Activated naive CD4-positive, alpha-beta T cell treated with anti-CD3 and anti-CD28 coated beads, Interleukin-2, amount 10 ng/mL, durations not matched to agents 7 days and 5 days (primary cell): ENCODE measurements at regions of chr11 and their contacts with region 1.

Region 1: GRCh38 chr11:66311965-66312548 is 4.8 kb downstream of the CD248 start:
- DNase-seq: peak; percentile 98
- H3K4me3 Mint-ChIP-seq: peak overlapping the region; percentile 85
- H3K27ac Mint-ChIP-seq: peak overlapping the region; percentile 100
- H3K4me1 Mint-ChIP-seq: peaks cover 39% of the 10 kb centered on the region
- H3K27me3 Mint-ChIP-seq: peaks cover 24% of the 10 kb centered on the region

Region 2: GRCh38 chr11:66188580-66188979 is 123.5 kb before region 1 on chr11:
- CTCF ChIA-PET with region 1: no interaction called
- DNase-seq: no peak
- H3K4me3 Mint-ChIP-seq: no peak overlapping the region
- H3K27ac Mint-ChIP-seq: no peak overlapping the region
- H3K4me1 Mint-ChIP-seq: peaks cover 9% of the 10 kb centered on the region
- H3K27me3 Mint-ChIP-seq: no peaks in the 10 kb centered on the region

Region 3: DNA sequence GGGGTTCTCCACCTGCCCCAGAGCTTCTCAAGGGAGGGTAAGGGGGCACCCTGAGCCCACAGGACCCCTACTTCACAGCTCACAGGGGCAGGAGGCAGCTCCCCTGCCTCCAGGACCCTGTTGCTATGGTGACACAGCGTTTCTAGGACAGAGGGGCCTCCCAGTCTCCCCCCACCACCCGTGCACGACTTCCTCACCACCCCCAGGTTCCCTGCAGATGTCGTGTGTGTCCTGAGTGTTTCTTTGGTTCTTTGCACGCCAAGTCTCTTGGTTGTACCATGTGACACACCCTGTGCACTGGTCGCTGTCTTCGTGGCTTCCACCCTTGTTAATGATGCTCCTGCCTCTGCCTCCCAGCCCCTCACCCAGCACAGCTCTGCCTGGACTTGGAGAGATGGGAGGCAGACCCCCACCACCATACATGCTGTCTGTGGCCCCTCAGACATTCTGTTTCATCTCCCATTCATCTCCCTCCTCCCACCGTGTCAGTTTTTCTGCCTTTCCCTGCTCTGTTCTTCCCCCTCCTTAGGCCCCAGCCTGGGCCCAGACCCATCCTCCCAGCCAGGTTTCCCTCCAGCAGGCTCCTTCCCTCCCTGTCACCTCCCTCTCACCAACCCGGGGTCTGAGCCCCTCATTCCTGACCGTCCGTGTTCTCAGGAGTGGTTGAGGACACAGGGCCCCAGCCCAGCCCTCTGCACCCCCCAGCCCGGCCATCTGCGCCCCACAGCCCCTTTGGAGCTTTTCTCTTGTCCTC is 68.1 kb before region 1 on chr11:
- CTCF ChIA-PET with region 1: no interaction called
- DNase-seq: no peak
- H3K4me3 Mint-ChIP-seq: no peak overlapping the region
- H3K27ac Mint-ChIP-seq: peak overlapping the region; percentile 75
- H3K4me1 Mint-ChIP-seq: peaks cover 14% of the 10 kb centered on the region
- H3K27me3 Mint-ChIP-seq: no peaks in the 10 kb centered on the region

Region 4: GRCh38 chr11:66328307-66329144 is 16.5 kb after region 1 on chr11:
- CTCF ChIA-PET with region 1: interaction called, 41 read pairs
- DNase-seq: peak; percentile 87
- H3K4me3 Mint-ChIP-seq: peak overlapping the region; percentile 21
- H3K27ac Mint-ChIP-seq: peak overlapping the region; percentile 87
- H3K4me1 Mint-ChIP-seq: peaks cover 55% of the 10 kb centered on the region
- H3K27me3 Mint-ChIP-seq: no peaks in the 10 kb centered on the region

Region 5: GRCh38 chr11:66336234-66337102 is 24.4 kb after region 1 on chr11 and contains the start of gene RIN1:
- CTCF ChIA-PET with region 1: interaction called, 41 read pairs
- DNase-seq: peak; percentile 64
- H3K4me3 Mint-ChIP-seq: peak within 1 kb of the TSS; percentile 77
- H3K27ac Mint-ChIP-seq: peak within 1 kb of the TSS; percentile 42
- H3K4me1 Mint-ChIP-seq: peaks cover 23% of the 10 kb centered on the region
- H3K27me3 Mint-ChIP-seq: peaks cover 14% of the 10 kb centered on the region

Region 6: DNA sequence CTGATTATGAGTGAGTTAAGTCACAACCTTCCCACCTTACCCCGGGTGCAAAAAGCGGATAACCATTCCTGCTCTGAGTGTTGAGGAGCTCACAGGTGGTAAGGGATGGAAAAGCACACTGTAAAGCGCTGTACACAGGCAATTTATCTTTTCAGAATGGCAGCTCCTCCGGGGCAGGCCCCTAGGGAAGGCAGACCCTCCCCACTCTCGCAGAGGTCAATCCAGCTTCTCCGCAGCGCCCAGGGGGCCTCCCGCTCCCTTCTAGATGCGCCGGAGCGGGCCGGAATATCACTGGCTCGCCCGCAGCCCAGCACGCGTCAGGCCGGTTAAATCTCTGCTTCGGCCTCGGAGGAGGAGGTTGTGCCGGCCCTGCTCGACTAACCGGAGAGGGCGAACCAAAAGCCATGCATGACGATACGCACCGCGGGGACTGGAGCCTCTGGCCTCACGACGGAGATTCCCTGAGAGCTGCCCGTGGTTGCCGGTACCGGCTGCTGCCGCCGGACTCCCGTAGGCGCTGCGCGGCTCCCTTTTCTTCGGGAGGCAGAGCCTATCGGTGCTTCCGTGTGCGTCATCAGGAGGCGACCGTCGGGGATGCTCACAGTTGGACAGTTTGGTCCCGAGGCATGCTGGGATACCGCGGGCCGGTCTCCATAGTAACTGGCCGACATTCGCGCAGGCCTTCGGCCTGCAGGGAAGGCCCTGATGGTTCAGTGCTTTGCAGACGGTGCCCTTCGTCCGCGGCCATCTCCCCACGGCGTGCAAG is 32.7 kb after region 1 on chr11 and contains the start of gene BRMS1:
- CTCF ChIA-PET with region 1: interaction called, 29 read pairs
- DNase-seq: peak; percentile 99
- H3K4me3 Mint-ChIP-seq: peak within 1 kb of the TSS; percentile 94
- H3K27ac Mint-ChIP-seq: peak within 1 kb of the TSS; percentile 92
- H3K4me1 Mint-ChIP-seq: peaks cover 54% of the 10 kb centered on the region
- H3K27me3 Mint-ChIP-seq: peaks cover 7% of the 10 kb centered on the region

Region 7: DNA sequence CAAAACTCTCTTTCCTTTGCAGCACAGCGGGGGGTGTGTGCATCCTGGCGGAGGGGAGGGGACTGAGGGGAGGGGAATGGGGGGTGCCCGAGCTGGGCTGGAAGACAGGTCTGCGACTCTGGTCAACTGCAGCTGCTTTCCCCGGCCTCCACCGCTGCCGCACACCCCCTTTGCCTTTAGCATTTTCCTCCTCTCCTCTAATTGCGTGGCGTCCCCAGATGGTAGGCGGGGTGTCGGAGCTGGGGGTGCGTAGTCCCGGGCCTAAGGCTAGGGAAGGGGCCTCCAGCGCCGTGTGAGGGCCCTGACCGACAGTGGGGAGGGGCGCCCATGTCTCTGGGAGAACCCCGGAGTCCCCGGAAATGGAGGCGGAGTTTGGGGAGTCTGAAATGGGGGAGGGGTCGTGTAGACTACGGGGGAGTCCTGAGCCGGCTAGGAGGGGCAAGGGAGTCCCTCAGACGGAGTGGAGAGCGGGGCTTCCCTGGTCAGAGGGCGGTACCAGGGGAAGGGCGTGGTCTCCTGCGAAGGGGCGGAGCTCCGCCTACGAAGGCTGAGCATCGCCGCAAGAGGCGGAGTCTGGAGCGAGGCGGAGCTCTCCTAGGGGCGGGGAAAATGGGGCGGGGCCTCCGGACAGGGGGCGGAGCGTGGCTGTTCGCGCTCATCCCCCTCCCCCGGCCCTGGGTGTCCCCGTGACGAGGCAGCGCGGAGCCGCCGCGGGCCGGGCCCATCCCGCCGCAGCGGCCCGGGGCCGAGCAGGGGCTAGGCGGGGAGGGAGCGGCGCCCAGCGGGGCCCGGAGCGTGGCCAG is 154.4 kb after region 1 on chr11 and contains the start of gene PELI3:
- CTCF ChIA-PET with region 1: no interaction called
- DNase-seq: peak; percentile 95
- H3K4me3 Mint-ChIP-seq: peak within 1 kb of the TSS; percentile 83
- H3K27ac Mint-ChIP-seq: peak within 1 kb of the TSS; percentile 80
- H3K4me1 Mint-ChIP-seq: peaks cover 48% of the 10 kb centered on the region
- H3K27me3 Mint-ChIP-seq: peaks cover 6% of the 10 kb centered on the region